ENCODE measurements at regions of chr14 and their contacts with region 1.

Region 1: DNA sequence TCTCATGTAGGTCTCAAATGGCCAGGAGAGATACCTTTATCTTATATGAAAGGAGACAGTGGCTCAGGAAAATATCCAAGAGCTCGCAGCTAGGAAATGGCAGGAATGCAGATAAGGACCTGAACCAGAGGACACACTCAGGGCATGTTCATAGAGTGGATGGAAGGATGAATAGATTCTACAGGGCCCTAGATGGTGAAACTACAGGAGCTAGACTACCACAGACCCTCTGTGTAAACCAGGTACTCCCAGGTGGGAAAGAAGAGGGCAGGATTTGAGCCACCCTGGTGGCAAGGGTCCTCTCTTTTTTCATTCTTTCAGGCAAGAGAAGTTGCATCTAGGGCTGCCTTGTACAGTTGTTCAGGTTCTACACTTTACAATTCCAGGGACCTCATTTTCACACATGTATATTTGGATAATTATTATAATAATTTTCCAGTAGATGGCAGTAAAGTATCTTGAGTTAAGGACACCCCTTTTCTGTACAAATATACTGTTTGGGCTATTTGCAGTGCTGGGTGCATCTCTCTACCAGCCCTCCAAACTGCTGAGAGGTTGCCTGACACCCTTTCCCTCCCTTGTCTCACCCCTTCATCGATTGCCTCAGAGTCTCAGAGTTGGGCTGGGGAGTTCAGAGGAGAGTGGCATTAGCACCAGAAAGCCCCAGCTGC is 10.5 kb upstream of the ZDHHC22 start:
- DNase-seq: peak; percentile 61
- H3K4me3 ChIP-seq: no peak overlapping the region
- H3K27ac ChIP-seq: no peak overlapping the region
- H3K4me1 ChIP-seq: peaks cover 0 to 6% of the 10 kb centered on the region in 2 experiments; a peak in 1 of 4 replicates
- H3K27me3 ChIP-seq: no peaks in the 10 kb centered on the region
- CTCF ChIP-seq: peak; percentile 54
- EP300 ChIP-seq: no peak
- RAD21 ChIP-seq: peak; percentile 75

Region 2: DNA sequence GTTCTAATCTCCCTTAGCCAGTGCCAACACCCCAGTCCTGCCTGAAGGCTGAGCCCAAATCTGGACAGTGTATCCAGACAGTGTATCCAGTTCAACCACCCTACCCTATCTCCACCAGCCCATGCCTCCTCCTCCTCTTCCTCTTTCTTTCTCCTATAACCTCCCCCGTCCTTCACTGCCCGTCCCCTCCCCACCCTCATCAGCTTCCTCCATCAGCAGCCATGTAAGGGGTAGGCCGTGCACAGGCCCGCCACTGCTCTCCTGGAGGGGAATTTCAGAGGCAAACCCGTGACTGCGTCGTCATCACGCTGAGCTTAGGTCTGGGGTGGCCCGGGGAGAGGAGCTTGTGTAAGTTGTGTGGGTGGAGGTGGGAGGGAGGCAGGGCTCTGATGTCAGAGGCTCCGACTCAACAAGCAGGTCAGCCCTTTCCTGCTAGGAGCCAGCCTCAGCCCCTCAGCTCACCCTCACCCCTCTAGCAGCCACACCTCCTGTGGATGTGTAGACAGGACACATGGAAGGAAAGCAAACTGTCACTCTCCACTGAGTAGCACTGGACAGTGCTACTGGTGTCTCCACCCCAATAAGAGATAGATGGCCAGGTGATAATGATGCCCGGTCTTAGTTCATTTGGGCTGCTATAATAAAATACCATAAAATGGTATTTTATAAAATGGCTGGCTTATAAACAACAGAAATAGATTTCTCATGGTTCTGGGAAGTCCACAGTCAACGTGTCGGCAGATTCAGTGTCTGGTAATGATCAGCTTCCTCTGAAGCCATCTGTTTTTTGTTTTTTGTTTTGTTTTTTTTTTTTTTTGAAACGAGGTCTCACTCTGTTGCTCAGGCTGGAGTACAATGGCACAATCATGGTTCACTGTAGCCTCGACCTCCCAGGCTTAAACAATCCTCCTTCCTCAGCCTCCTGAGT is 174.0 kb before region 1 on chr14:
- CTCF ChIA-PET with region 1: no interaction called
- POLR2A ChIA-PET with region 1: no interaction called
- DNase-seq: peak; percentile 47
- H3K4me3 ChIP-seq: no peak overlapping the region
- H3K27ac ChIP-seq: peak overlapping the region in 1 of 2 experiments; percentile 28; a peak in 1 of 4 replicates
- H3K4me1 ChIP-seq: peaks cover 0 to 16% of the 10 kb centered on the region in 2 experiments; a peak in 1 of 4 replicates
- H3K27me3 ChIP-seq: no peaks in the 10 kb centered on the region
- CTCF ChIP-seq: no peak
- EP300 ChIP-seq: no peak
- RAD21 ChIP-seq: no peak

Region 3: GRCh38 chr14:77124345-77125280 is 27.4 kb before region 1 on chr14:
- CTCF ChIA-PET with region 1: interaction called, 12 read pairs
- POLR2A ChIA-PET with region 1: interaction called, 3 read pairs
- DNase-seq: peak; percentile 92
- H3K4me3 ChIP-seq: peak overlapping the region; percentile 53 to 58; a peak in 3 of 4 replicates
- H3K27ac ChIP-seq: no peak overlapping the region
- H3K4me1 ChIP-seq: peaks cover 0 to 20% of the 10 kb centered on the region in 2 experiments; a peak in 1 of 4 replicates
- H3K27me3 ChIP-seq: no peaks in the 10 kb centered on the region
- CTCF ChIP-seq: peak; percentile 53
- EP300 ChIP-seq: no peak
- RAD21 ChIP-seq: peak; percentile 15; the same call in 1 of the 2 replicates

Region 4: GRCh38 chr14:77139540-77140358 is 12.3 kb before region 1 on chr14:
- CTCF ChIA-PET with region 1: interaction called, 117 read pairs
- POLR2A ChIA-PET with region 1: no interaction called
- DNase-seq: peak; percentile 90
- H3K4me3 ChIP-seq: peak overlapping the region; percentile 50 to 62; a peak in 3 of 4 replicates
- H3K27ac ChIP-seq: no peak overlapping the region
- H3K4me1 ChIP-seq: peaks cover 0 to 29% of the 10 kb centered on the region in 2 experiments; a peak in 3 of 4 replicates
- H3K27me3 ChIP-seq: peaks cover 40% of the 10 kb centered on the region
- CTCF ChIP-seq: peak; percentile 63
- EP300 ChIP-seq: no peak
- RAD21 ChIP-seq: peak; percentile 54

Region 5: GRCh38 chr14:77195771-77196201 is 43.7 kb after region 1 on chr14:
- CTCF ChIA-PET with region 1: interaction called, 13 read pairs
- POLR2A ChIA-PET with region 1: no interaction called
- DNase-seq: no peak
- H3K4me3 ChIP-seq: no peak overlapping the region
- H3K27ac ChIP-seq: no peak overlapping the region
- H3K4me1 ChIP-seq: no peaks in the 10 kb centered on the region
- H3K27me3 ChIP-seq: no peaks in the 10 kb centered on the region; the same call in 1 of the 2 replicates
- CTCF ChIP-seq: no peak
- EP300 ChIP-seq: no peak
- RAD21 ChIP-seq: no peak

Region 6: DNA sequence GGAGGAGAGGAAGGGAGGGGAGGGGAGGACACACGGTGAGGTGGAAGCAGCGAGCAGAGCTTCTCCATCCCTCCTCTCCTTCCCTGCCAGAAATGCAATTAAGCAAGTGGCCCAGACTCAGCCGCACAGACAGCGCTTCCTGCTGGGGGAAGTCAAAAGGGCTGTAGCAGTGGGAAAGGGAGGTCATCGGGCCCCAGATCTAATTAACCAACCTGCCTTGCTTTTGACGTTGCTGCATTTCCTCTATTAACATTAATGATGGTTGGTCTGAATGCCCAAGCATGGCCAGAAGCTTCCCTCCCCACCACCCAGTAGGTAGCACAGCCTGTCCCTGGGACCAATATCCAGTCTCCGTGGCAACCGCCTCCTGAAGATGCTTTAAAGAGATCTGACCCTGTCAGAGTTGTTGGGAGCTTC is 123.6 kb after region 1 on chr14:
- CTCF ChIA-PET with region 1: interaction called, 21 read pairs
- POLR2A ChIA-PET with region 1: no interaction called
- DNase-seq: peak; percentile 84
- H3K4me3 ChIP-seq: no peak overlapping the region
- H3K27ac ChIP-seq: peak overlapping the region in 1 of 2 experiments; percentile 65; a peak in 2 of 4 replicates
- H3K4me1 ChIP-seq: peaks cover 0 to 18% of the 10 kb centered on the region in 2 experiments; a peak in 1 of 4 replicates
- H3K27me3 ChIP-seq: peaks cover 7% of the 10 kb centered on the region
- CTCF ChIP-seq: no peak
- EP300 ChIP-seq: no peak
- RAD21 ChIP-seq: peak; percentile 52

Region 7: GRCh38 chr14:77301103-77301502 is 149.1 kb after region 1 on chr14:
- CTCF ChIA-PET with region 1: interaction called, 27 read pairs
- POLR2A ChIA-PET with region 1: no interaction called
- DNase-seq: peak; percentile 65
- H3K4me3 ChIP-seq: no peak overlapping the region; a peak in 1 of 4 replicates
- H3K27ac ChIP-seq: no peak overlapping the region
- H3K4me1 ChIP-seq: peaks cover under 1 to 19% of the 10 kb centered on the region in 2 experiments; a peak in 3 of 4 replicates
- H3K27me3 ChIP-seq: no peaks in the 10 kb centered on the region
- CTCF ChIP-seq: peak; percentile 81
- EP300 ChIP-seq: no peak
- RAD21 ChIP-seq: peak; percentile 76

Region 8: GRCh38 chr14:77320238-77320935 is 168.3 kb after region 1 on chr14 and contains the start of gene POMT2:
- CTCF ChIA-PET with region 1: interaction called, 133 read pairs
- POLR2A ChIA-PET with region 1: no interaction called
- DNase-seq: peak; percentile 89
- H3K4me3 ChIP-seq: peak within 1 kb of the TSS; percentile 99 to 100
- H3K27ac ChIP-seq: peak within 1 kb of the TSS; percentile 96 to 98
- H3K4me1 ChIP-seq: peaks cover 0 to 22% of the 10 kb centered on the region in 2 experiments; a peak in 2 of 4 replicates
- H3K27me3 ChIP-seq: no peaks in the 10 kb centered on the region
- CTCF ChIP-seq: peak; percentile 50
- EP300 ChIP-seq: no peak
- RAD21 ChIP-seq: no peak
- polyA plus RNA-seq, gene POMT2: 19.9 and 22.8 TPM in 2 replicates

Measured in SK-N-SH (cell line).